PC-9 (cell line): ENCODE measurements at regions of chr1 and their contacts with region 1.

Region 1: GRCh38 chr1:186620951-186621350 is 59.3 kb downstream of the PTGS2 start:
- DNase-seq: no peak
- H3K4me3 ChIP-seq: no peak overlapping the region
- H3K27ac ChIP-seq: no peak overlapping the region
- H3K4me1 ChIP-seq: no peaks in the 10 kb centered on the region
- H3K27me3 ChIP-seq: no peaks in the 10 kb centered on the region
- CTCF ChIP-seq: no peak

Region 2: DNA sequence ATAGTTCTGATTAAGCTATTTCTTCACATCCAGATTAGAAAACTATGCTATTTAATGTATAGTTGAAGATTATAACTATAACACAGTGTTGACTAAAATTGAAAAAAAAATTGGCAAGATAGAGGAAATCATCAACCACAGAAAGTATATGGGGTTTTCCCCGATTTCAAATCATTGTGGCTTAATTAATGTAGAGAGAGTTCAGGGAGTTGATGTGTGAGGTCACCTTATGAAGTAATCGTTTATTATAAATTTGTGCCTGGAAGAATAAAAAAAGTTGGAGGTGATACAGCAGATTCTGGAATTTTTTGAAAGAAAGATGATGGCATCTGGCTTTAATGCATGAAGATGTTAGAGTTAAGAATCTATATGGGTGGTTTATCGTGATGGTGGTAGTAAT is 25.0 kb before region 1 on chr1:
- CTCF ChIA-PET with region 1: no interaction called
- POLR2A ChIA-PET with region 1: interaction called, 10 read pairs
- intact Hi-C with region 1: no loop called
- DNase-seq: no peak
- H3K4me3 ChIP-seq: no peak overlapping the region
- H3K27ac ChIP-seq: no peak overlapping the region
- H3K4me1 ChIP-seq: no peaks in the 10 kb centered on the region
- H3K27me3 ChIP-seq: no peaks in the 10 kb centered on the region
- CTCF ChIP-seq: no peak

Region 3: DNA sequence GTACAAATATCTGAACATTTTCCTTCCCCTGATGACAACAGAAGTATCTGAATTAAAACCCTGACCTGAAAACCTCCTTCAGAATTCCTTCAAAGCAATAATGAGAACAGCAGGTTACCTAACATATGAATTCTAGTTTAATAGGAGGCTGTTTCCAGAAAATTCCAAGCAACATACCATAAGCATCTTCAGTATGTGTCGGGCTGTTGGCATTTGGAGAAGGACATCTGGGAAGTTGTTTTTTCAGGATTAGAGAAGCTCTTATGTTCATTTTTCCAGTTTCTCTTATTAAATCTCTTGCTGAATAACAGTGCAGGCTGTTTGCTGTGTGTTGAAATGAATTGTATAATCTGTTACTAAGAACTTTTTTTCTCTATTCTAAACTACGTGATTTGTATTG is 309.3 kb after region 1 on chr1:
- CTCF ChIA-PET with region 1: no interaction called
- POLR2A ChIA-PET with region 1: no interaction called
- intact Hi-C with region 1: no loop called
- DNase-seq: no peak
- H3K4me3 ChIP-seq: no peak overlapping the region
- H3K27ac ChIP-seq: no peak overlapping the region
- H3K4me1 ChIP-seq: no peaks in the 10 kb centered on the region; the same call in 1 of the 2 replicates
- H3K27me3 ChIP-seq: no peaks in the 10 kb centered on the region
- CTCF ChIP-seq: no peak